ENCODE measurements at regions of chr11 and their contacts with region 1.

Region 1: DNA sequence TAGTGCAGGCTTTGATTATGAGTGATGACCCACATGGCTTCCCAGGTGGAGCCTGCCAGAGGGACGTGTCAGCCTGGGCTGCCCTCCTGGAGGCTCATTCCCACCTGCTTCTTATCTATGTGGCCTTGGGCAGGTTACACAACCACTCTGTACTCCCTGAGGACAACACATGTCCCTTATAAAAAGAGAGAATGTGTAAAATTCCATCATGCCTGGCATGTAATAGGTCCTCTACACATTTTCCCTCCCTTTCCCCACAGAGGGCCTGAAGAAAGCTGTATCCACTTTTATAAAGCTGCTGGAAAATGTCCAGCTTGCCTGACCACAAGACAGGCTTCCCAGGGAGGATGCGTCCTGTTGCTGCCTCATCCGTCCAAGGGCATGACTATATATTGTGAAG is 55.0 kb upstream of the VSTM5 start:
- DNase-seq: no peak
- CTCF ChIP-seq: no peak

Region 2: GRCh38 chr11:93895106-93895862 is 10.1 kb before region 1 on chr11:
- CTCF ChIA-PET with region 1: interaction called, 12 read pairs
- POLR2A ChIA-PET with region 1: no interaction called
- DNase-seq: no peak
- CTCF ChIP-seq: peak; percentile 18

Region 3: DNA sequence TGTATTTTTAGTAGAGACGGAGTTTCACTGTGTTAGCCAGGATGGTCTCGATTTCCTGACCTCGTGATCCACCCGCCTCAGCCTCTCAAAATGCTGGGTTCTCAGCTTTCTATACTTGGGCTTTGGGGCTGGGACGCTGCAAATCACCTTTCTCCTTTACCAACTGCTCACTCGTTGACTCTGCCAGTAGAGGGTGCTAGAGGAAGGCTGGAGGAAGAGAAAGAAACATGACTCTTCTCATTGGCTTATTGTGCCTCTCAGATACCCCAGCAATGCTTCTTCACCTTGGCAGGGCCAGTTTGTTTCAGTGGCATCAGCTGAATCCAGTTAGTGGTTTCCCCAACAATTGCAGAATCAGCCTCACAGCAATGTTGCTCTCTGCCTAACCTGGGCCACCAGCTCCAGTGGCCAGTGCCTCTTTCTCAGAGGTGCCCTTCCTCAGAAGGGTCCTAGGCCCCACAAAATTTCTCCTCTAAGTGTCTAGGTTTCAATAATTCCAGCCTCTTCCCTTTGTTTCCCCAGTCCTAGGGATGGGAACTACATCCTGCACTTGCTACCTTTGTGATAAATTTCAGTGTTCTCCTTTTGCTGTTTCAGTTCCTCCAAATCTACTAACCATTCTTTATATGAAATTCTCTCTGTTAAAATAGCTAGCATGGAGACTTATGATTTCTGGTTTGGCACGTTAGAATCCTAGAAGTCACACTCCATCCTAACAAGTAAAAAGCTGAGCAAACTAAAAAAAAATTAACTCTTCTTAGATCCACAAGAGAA is 16.5 kb after region 1 on chr11:
- CTCF ChIA-PET with region 1: interaction called, 10 read pairs
- POLR2A ChIA-PET with region 1: no interaction called
- DNase-seq: peak; percentile 57
- CTCF ChIP-seq: peak; percentile 43

Measured in GM10248 (cell line).